Astrocyte of the cerebellum (primary cell): ENCODE measurements at regions of chr1 and their contacts with region 1.

Region 1: DNA sequence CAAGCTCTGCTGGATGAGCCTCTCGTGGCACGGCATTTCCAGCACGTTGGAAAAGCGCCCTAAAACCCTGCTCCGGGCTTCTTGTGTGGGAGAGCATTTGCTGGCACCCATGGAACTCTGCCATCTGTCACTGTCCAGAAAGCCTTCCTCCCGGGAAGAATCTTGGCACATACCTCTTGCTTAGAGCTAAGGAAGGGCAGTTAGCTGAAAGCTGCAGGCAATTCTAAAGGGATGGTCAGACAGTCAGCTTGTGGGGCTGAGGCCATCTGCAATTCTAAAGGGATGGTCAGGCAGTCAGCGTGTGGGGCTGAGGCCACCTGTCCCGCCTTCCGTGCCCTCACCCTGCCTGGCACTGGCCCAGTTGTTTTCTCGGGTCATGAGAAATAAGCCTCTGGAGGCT is 139.0 kb upstream of the TMEM51 start:
- DNase-seq: no peak
- H3K4me3 ChIP-seq: no peak overlapping the region
- CTCF ChIP-seq: no peak

Region 2: DNA sequence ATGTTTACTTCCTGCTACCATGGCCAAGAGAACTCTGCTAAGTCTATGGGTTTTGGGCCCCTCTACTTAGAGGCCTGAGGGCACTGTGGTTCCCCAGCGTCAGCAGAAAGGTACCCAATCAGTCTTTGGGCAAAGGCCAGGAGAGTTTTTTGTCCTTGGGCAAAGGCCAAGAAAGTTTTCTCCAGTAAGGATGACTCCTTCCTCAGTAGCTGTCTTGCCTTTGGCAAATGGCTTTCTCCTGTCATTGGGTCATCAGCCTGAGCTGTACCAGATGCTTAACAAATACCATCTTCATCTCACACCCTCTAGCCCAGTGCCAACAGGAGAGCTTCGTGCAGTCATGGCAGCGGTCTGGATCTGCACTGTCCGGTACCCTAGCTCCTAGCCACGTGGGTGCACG is 60.3 kb before region 1 on chr1:
- in situ Hi-C with region 1: loop called (anchors 5 kb)
- DNase-seq: no peak
- H3K4me3 ChIP-seq: no peak overlapping the region
- CTCF ChIP-seq: no peak

Region 3: DNA sequence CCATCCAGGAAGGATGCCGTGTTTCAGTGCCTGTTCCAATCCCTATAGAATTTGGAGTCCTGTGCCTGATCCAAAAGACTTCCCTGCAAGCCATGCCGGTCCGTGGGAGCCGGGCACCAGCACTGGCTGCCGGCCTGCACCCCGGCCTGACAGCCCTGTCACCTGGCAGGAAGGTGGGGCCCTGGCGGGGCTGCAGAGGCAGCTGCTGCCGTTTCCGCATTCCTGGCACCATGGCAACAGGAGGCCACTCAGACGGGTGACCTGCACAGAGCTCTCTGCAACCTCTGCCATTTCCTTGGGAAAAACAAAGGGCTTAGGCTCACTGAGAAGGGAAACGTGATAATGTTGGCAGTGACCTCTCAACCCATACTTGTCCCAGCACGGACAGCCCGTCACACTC is 75.9 kb after region 1 on chr1:
- in situ Hi-C with region 1: no loop called
- DNase-seq: no peak
- H3K4me3 ChIP-seq: no peak overlapping the region
- CTCF ChIP-seq: no peak